HCT116 (cell line): ENCODE measurements at regions of chr15 and their contacts with region 1.

Region 1: DNA sequence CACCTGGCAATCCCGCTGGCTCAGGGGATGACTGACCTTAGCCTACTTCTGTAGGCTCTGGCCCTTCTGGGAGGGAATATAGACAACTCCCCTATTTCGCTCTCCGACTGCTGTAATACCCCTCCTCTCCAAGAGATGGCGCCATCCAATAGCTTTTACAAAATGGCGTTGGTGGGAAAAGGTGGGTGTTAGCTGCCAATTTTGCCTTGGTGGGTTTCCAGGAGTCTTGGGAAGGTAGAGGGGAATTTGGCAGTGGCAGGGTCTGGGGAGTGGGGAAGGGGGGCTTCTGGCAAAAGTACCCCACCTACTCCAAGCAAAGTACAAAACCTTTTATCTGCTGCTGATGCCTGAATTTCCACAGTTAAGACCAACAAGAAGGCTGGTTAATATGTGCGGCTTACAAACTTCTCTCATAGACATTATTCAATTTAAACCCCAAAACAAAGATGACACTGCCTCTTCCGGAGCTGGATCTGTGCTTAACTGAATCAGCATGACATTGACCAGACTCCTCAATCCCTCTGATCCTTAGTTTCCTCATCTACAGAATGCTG is 62.1 kb downstream of the RASGRF1 start:
- DNase-seq: peak; percentile 52
- ATAC-seq: peak; percentile 86
- H3K4me3 ChIP-seq: no peak overlapping the region
- H3K27ac ChIP-seq: no peak overlapping the region
- H3K4me1 ChIP-seq: no peaks in the 10 kb centered on the region
- H3K27me3 ChIP-seq: no peaks in the 10 kb centered on the region
- CTCF ChIP-seq: peak; percentile 86 to 98 (median 93)
- POLR2A ChIP-seq: no peak
- RAD21 ChIP-seq: peak; percentile 90

Region 2: DNA sequence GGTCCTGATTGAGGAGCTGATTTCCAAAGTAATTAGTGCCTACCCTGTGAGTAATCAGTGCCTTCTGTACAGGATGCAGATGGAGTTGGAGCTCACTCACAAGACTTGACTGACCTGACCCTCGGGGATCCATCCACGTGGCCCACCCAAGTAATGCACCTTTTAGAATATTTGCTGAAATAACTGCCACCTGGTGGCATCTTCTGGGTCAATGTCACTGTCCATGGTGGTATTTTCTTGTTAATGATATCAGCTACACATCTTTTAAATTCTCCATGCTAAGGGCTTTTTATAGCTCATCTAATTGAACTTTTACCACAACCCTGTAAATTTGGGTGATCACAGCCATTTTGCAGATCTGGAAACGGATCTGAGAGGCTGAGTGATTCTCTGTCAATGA is 179.7 kb after region 1 on chr15:
- CTCF ChIA-PET with region 1: interaction called, 16 read pairs
- POLR2A ChIA-PET with region 1: no interaction called
- RAD21 ChIA-PET with region 1: interaction called, 3 read pairs
- intact Hi-C with region 1: no loop called
- DNase-seq: no peak
- ATAC-seq: peak; percentile 70
- H3K4me3 ChIP-seq: no peak overlapping the region
- H3K27ac ChIP-seq: no peak overlapping the region
- H3K4me1 ChIP-seq: no peaks in the 10 kb centered on the region
- H3K27me3 ChIP-seq: peaks cover 62% of the 10 kb centered on the region
- CTCF ChIP-seq: peak; percentile 19 to 53 (median 40); a peak in 5 of 6 replicates
- POLR2A ChIP-seq: no peak
- RAD21 ChIP-seq: peak; percentile 16; the same call in 1 of the 2 replicates

Region 3: GRCh38 chr15:79265987-79266579 is 237.6 kb after region 1 on chr15:
- CTCF ChIA-PET with region 1: no interaction called
- POLR2A ChIA-PET with region 1: no interaction called
- RAD21 ChIA-PET with region 1: no interaction called
- intact Hi-C with region 1: no loop called
- DNase-seq: no peak
- ATAC-seq: no peak
- H3K4me3 ChIP-seq: no peak overlapping the region
- H3K27ac ChIP-seq: no peak overlapping the region
- H3K4me1 ChIP-seq: peaks cover 0 to 9% of the 10 kb centered on the region in 2 experiments; a peak in 2 of 4 replicates
- H3K27me3 ChIP-seq: no peaks in the 10 kb centered on the region
- CTCF ChIP-seq: no peak
- POLR2A ChIP-seq: no peak
- RAD21 ChIP-seq: no peak